CD8-positive, alpha-beta T cell (primary cell): ENCODE measurements at regions of chr15 and their contacts with region 1.

Region 1: DNA sequence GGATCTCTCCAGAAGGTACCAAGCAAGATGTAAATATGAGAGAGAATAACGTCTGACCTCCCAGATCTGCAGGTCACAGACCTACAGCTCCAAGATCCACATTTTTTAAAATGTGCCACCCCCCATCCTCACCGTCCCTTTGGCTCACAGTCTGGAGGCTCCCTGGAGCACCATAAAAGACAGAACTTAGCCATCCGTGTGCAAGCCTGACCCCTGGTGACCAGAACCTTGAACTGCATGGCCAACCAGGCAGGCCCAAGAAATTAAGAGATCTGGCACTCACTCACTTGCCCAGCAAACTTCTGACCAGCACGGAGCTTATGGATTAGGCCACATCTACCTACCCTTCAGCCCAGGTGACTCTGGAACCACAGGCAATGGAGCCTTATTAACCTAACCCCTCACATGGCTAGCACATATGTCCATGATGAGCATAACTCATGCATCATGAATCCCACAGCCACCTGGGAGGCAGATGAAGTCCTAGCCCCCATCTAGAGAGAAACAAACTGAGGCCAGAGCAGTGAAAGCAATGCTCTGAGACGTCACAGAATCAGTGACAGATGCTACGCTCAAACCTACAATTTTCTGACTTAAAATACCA is 275.3 kb downstream of the UACA start:
- DNase-seq: peak; percentile 58 to 83 (median 75)
- ATAC-seq: peak; percentile 29
- H3K4me3 ChIP-seq: no peak overlapping the region
- H3K4me3 Mint-ChIP-seq: no peak overlapping the region
- H3K27ac ChIP-seq: no peak overlapping the region
- H3K27ac Mint-ChIP-seq: no peak overlapping the region
- H3K4me1 ChIP-seq: peaks cover 49% of the 10 kb centered on the region
- H3K4me1 Mint-ChIP-seq: peaks cover 67% of the 10 kb centered on the region
- H3K27me3 ChIP-seq: peaks cover 0 to 2% of the 10 kb centered on the region in 2 experiments
- H3K27me3 Mint-ChIP-seq: peaks cover 3% of the 10 kb centered on the region
- CTCF ChIP-seq: peak; percentile 90

Region 2: GRCh38 chr15:69576035-69576526 is 912.0 kb before region 1 on chr15:
- CTCF ChIA-PET with region 1: interaction called, 28 read pairs
- POLR2A ChIA-PET with region 1: no interaction called
- intact Hi-C with region 1: loop called (anchors 1 kb)
- DNase-seq: peak; percentile 57 to 86 (median 70)
- ATAC-seq: peak; percentile 82
- H3K4me3 ChIP-seq: no peak overlapping the region
- H3K4me3 Mint-ChIP-seq: no peak overlapping the region
- H3K27ac ChIP-seq: no peak overlapping the region
- H3K27ac Mint-ChIP-seq: no peak overlapping the region
- H3K4me1 ChIP-seq: peaks cover 11% of the 10 kb centered on the region
- H3K4me1 Mint-ChIP-seq: peaks cover 21% of the 10 kb centered on the region
- H3K27me3 ChIP-seq: no peaks in the 10 kb centered on the region
- H3K27me3 Mint-ChIP-seq: no peaks in the 10 kb centered on the region
- CTCF ChIP-seq: peak; percentile 80

Region 3: GRCh38 chr15:69760890-69761568 is 727.1 kb before region 1 on chr15:
- CTCF ChIA-PET with region 1: interaction called, 3 read pairs
- POLR2A ChIA-PET with region 1: interaction called, 3 read pairs
- intact Hi-C with region 1: loop called (anchors 1 to 2 kb)
- DNase-seq: peak; percentile 51 to 95 (median 82)
- ATAC-seq: peak; percentile 69
- H3K4me3 ChIP-seq: no peak overlapping the region
- H3K4me3 Mint-ChIP-seq: peak overlapping the region; percentile 53
- H3K27ac ChIP-seq: peak overlapping the region in 1 of 2 experiments; percentile 17
- H3K27ac Mint-ChIP-seq: peak overlapping the region; percentile 87
- H3K4me1 ChIP-seq: peaks cover 60% of the 10 kb centered on the region
- H3K4me1 Mint-ChIP-seq: peaks cover 69% of the 10 kb centered on the region
- H3K27me3 ChIP-seq: no peaks in the 10 kb centered on the region
- H3K27me3 Mint-ChIP-seq: no peaks in the 10 kb centered on the region
- CTCF ChIP-seq: no peak

Region 4: DNA sequence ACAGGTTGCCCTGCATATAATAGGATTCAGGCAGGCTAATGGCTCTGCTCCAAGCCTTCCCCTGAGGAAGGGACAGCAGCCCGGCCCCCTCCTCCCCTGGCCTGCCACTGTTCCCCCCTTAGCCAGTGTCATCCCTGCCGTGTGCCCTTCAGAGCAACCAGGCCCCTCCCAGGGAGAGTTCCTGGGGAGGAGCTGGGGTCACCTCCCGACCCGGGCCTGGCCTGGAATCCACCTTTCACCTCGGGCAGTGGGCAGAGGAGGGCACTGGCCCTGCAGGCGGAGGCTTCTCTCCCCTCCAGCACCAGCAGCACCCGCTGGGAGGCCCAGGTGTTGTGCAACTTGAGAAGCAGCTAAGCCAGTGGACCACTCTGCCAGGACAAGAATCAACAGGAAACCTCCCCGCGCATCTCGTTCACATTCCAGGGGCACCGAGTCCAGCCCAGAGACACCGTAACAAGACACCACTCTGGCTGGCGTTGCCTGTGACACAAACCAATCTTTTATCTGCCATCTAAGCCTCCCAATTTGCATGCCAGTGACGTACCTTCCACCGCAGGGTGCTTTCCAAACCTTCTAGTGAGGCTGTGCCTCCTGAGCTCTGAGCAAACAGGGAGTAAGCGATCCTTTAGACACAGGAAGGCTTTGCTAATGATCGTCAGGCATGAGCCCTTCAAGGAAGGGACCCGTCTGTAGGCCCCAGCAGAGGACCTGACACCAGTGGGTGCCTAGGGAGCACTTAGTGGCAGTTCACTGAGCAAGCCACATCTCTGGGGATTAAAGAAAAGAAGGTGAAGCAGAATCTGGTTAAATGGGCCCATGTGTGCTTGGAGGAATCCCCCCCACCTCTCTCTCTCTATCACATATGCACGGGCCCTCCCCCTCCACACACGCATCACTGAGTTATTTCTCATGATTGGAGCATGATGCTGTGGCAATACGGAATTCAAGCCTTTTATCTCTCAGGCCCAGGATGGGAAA is 291.5 kb before region 1 on chr15:
- CTCF ChIA-PET with region 1: no interaction called
- POLR2A ChIA-PET with region 1: no interaction called
- intact Hi-C with region 1: no loop called
- DNase-seq: peak in 4 of 9 experiments; percentile 13 to 42 (median 24)
- ATAC-seq: peak; percentile 42
- H3K4me3 ChIP-seq: no peak overlapping the region
- H3K4me3 Mint-ChIP-seq: no peak overlapping the region
- H3K27ac ChIP-seq: no peak overlapping the region
- H3K27ac Mint-ChIP-seq: no peak overlapping the region
- H3K4me1 ChIP-seq: no peaks in the 10 kb centered on the region
- H3K4me1 Mint-ChIP-seq: no peaks in the 10 kb centered on the region
- H3K27me3 ChIP-seq: no peaks in the 10 kb centered on the region
- H3K27me3 Mint-ChIP-seq: no peaks in the 10 kb centered on the region
- CTCF ChIP-seq: no peak

Region 5: GRCh38 chr15:70459312-70459875 is 28.7 kb before region 1 on chr15:
- CTCF ChIA-PET with region 1: interaction called, 43 read pairs
- POLR2A ChIA-PET with region 1: no interaction called
- intact Hi-C with region 1: loop called in 1 of 2 experiments (anchors 2 kb)
- DNase-seq: no peak
- ATAC-seq: no peak
- H3K4me3 ChIP-seq: no peak overlapping the region
- H3K4me3 Mint-ChIP-seq: no peak overlapping the region
- H3K27ac ChIP-seq: no peak overlapping the region
- H3K27ac Mint-ChIP-seq: no peak overlapping the region
- H3K4me1 ChIP-seq: no peaks in the 10 kb centered on the region
- H3K4me1 Mint-ChIP-seq: peaks cover 6% of the 10 kb centered on the region
- H3K27me3 ChIP-seq: no peaks in the 10 kb centered on the region
- H3K27me3 Mint-ChIP-seq: peaks cover 3% of the 10 kb centered on the region
- CTCF ChIP-seq: no peak

Region 6: DNA sequence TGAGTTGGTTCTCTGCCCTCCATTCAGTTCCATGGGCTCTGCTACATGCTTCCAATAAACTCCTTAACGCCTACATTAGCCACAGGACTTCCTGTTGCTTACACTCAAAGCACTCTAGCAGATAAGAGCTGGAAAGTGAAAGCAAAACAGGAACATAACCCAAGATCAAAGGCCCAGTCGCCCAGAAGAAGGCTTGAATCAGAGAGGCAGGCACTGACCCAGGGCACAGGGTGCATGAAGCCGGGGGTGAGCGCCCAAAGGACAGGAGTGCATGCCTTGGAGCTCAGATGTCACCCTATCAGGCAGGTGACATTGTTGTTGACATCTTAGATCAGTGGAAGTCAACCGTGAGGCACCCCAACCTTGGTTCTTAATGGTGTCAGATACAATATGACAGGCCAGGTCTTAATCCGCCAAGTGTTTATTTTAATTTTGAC is 40.2 kb after region 1 on chr15:
- CTCF ChIA-PET with region 1: interaction called, 19 read pairs
- POLR2A ChIA-PET with region 1: interaction called, 13 read pairs
- intact Hi-C with region 1: no loop called
- DNase-seq: peak in 7 of 9 experiments; percentile 42 to 89 (median 67)
- ATAC-seq: peak; percentile 85
- H3K4me3 ChIP-seq: peak overlapping the region; percentile 7 to 40
- H3K4me3 Mint-ChIP-seq: peak overlapping the region; percentile 80
- H3K27ac ChIP-seq: peak overlapping the region; percentile 48 to 69
- H3K27ac Mint-ChIP-seq: peak overlapping the region; percentile 98
- H3K4me1 ChIP-seq: peaks cover 56% of the 10 kb centered on the region
- H3K4me1 Mint-ChIP-seq: peaks cover 80% of the 10 kb centered on the region
- H3K27me3 ChIP-seq: no peaks in the 10 kb centered on the region
- H3K27me3 Mint-ChIP-seq: no peaks in the 10 kb centered on the region
- CTCF ChIP-seq: no peak

Region 7: GRCh38 chr15:70584838-70585706 is 97.0 kb after region 1 on chr15:
- CTCF ChIA-PET with region 1: interaction called, 15 read pairs
- POLR2A ChIA-PET with region 1: no interaction called
- intact Hi-C with region 1: loop called in 1 of 2 experiments (anchors 1 kb)
- DNase-seq: peak; percentile 25 to 70 (median 59)
- ATAC-seq: peak; percentile 82
- H3K4me3 ChIP-seq: peak overlapping the region in 1 of 2 experiments; percentile 33
- H3K4me3 Mint-ChIP-seq: peak overlapping the region; percentile 53
- H3K27ac ChIP-seq: no peak overlapping the region
- H3K27ac Mint-ChIP-seq: no peak overlapping the region
- H3K4me1 ChIP-seq: peaks cover 12% of the 10 kb centered on the region
- H3K4me1 Mint-ChIP-seq: peaks cover 10% of the 10 kb centered on the region
- H3K27me3 ChIP-seq: peaks cover 0 to 7% of the 10 kb centered on the region in 2 experiments
- H3K27me3 Mint-ChIP-seq: peaks cover 20% of the 10 kb centered on the region
- CTCF ChIP-seq: peak; percentile 69